ENCODE measurements at regions of chr2 and their contacts with region 1.

Region 1: DNA sequence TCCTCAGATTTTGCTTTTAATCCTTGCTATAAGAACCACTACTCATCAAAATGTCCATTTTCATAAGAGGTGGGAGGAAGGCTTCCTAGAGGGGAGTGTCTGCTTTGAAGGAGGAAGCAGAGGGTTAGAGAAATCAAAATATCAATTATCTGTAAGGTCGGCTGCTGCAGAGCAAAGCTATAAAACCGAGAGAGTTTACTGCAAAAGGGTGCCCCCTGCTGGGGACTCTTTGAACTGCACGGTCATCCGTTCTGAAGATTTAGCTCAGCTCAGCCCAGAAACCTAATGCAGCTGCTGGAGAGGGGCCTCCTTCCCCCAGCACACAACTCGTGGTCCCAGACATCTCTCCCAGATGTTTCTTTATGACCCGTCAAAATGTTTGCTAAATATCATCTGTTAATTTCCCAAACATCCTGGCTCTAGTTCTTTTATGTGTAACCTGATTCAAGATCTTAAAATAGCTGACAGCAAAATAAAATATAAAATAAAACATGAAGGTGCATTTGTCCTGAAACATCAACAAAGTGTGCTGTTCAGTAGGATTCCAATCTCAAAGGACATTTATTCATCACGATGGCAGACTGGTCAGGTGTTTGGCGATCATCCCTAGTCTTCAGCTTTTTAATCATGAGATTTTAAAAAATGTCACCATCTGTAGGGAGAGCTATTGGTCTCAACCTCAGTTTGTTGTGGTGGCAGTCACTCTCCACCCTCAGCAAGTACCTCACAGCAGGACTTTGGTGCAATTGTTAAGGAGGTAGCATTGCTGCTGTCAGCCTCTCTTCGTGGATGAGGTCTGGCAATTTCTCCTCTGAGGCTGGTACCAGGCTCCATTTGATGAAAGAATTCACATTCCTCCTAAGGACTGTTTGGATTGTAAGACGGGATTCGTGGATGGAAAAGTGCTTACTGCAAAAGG is 185.9 kb downstream of the MTX2 start:
- DNase-seq: peak; percentile 89
- ATAC-seq: peak; percentile 78

Region 2: GRCh38 chr2:176554101-176555048 is 99.2 kb after region 1 on chr2:
- intact Hi-C with region 1: loop called (anchors 5 kb)
- DNase-seq: peak; percentile 40
- ATAC-seq: peak; percentile 86

Region 3: DNA sequence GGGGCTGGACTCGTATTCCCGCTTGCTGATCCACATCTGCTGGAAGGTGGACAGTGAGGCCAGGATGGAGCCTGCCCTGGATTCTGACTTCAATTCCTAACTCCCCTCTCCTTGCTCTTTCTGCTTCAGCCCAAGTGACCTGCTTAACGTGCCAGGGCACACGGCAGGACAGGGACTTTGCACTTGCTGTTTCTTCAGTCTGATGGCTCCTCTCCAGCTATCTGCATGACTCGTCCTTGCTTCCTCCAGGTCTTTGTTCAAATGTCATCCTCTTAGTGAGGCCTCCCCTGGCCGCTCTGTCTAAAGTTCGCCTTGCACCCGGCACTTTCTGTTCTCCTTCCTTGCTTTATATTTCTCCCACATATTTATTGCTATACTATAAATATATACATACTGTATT is 171.6 kb after region 1 on chr2:
- intact Hi-C with region 1: no loop called
- DNase-seq: no peak
- ATAC-seq: no peak

Region 4: DNA sequence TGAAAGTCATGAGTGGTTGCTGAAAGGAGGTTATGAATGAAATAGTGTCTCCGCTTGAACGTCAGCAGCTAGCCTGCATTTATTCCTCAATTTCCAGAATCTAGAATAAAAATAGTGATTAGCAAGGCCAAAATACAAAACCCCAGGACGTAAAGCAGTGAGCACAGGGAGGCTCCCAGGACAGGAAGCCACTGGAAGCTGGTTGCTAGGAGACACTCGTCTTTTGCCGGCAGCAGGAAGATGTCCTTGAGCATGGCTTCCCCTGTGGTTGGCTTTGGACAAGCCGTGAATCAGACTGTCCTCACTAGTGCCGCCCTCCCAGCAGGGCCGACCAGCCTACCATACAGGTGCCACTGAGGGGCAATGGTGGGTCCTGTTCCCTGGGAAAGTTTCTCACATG is 188.5 kb after region 1 on chr2:
- intact Hi-C with region 1: loop called (anchors 5 kb)
- DNase-seq: no peak
- ATAC-seq: no peak

Measured in Right ventricle myocardium superior (tissue), 1 donor.